ENCODE measurements at regions of chr17 and their contacts with region 1.

Region 1: GRCh38 chr17:76461765-76462555 is 5.4 kb upstream of the AANAT start:
- DNase-seq: peak in 1 of 5 donors; percentile 29
- H3K4me3 ChIP-seq: no peak overlapping the region
- H3K27ac ChIP-seq: no peak overlapping the region
- H3K4me1 ChIP-seq: no peaks in the 10 kb centered on the region
- H3K27me3 ChIP-seq: no peaks in the 10 kb centered on the region
- CTCF ChIP-seq: no peak

Region 2: DNA sequence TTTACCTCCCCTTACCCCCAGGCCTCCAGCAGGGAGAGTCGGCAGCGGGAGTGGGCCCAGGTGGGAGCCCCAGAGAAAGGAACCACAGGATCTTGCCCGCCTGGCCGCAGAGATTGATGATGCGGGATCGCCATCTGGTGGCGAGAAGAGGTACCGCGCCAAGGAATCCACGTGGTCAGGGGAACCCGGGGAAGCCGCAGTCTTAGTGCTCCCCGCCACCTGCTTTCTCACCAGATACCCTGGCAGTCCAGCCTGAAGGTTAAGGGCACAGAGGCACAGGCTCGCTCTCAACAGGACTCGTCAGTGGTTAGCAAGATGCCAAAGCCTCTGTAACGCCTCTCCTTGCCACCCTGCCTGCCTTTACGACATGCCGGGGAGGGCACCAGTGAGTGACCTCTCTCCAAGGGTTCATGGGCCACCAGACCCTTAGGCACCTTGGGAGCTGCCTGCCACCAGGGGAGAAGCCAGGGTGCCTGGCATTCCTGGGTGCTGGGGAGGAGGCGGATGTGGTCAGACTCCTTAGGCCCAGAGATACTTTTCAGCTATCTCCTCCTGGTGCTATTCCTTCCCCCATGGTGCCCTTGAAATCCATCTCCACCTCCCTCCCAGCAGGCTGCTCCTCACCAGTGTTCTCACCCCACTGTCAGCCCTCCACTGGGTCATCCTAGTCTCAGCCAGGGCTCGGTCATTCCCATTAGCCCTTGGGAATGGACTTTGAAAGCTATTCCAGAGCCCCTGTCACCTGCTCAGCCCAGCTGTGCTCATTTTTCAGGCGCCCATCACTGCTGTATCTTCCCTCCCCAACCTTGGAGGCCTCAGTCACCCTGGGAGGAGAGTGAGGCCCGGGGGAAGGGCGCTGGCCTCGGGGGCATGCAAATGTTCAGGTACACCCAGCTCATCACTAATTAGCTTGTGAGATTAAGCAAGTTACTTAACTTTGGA is 44.7 kb after region 1 on chr17:
- intact Hi-C with region 1: loop called (anchors 5 kb)
- DNase-seq: peak; percentile 83 to 92 (median 87)
- H3K4me3 ChIP-seq: no peak overlapping the region
- H3K27ac ChIP-seq: no peak overlapping the region
- H3K4me1 ChIP-seq: peaks cover 0 to 10% (median 0%) of the 10 kb centered on the region in 3 donors
- H3K27me3 ChIP-seq: no peaks in the 10 kb centered on the region
- CTCF ChIP-seq: peak; percentile 98

Region 3: GRCh38 chr17:76562734-76563148 is 100.8 kb after region 1 on chr17:
- intact Hi-C with region 1: no loop called
- DNase-seq: no peak
- H3K4me3 ChIP-seq: no peak overlapping the region
- H3K27ac ChIP-seq: no peak overlapping the region
- H3K4me1 ChIP-seq: peaks cover 0 to 29% (median 27%) of the 10 kb centered on the region in 3 donors
- H3K27me3 ChIP-seq: no peaks in the 10 kb centered on the region
- CTCF ChIP-seq: no peak

Measured in kidney (tissue), 22 donors.